ENCODE measurements at regions of chr5 and their contacts with region 1.

Region 1: DNA sequence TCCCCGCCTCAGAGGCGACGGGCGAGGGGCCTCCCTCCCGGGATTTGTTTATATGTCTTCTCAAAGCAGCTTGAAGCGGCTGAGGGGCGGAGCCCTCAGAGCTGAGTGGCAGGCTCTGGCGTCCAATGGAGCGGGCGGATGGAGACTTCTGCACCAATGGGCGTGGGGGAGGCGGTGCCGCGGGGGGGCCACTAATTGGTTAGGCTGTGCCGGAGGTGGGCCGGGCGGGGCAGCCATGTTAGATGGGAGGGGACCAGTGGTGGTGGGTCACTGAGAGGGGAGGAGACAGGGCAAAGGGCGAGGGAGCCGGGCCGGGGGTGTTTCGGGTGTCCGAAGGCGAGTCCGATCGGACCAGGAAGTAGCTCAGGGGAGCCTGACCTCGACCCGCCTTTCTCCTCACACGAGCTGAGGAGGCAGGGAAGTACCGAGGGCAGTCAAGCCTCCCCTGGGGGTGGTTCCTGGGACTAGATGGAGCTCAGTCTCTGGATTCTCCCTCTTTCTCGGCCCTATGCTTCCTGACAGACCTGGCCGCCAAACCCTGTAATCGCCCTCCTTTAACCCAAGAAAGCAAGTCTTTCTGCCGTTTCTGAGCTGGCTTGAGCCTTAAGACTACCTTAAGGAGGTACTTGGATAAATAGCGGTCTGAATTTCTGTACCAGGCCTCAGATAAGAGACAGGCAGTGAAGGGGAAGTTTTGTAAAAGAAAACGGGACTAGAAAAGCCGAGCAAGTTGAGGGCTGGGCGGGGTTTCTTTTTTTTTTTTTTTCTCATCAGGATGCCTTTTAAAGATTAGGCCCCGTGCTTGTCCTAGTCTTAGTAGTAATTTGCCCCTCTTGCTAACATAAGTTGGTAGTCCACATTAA is 1.1 kb downstream of the CREBRF start:
- DNase-seq: peak; percentile 100
- ATAC-seq: peak; percentile 90
- H3K4me3 Mint-ChIP-seq: peak overlapping the region; percentile 95
- H3K27ac Mint-ChIP-seq: peak overlapping the region; percentile 97
- H3K4me1 Mint-ChIP-seq: peaks cover 53% of the 10 kb centered on the region
- H3K27me3 Mint-ChIP-seq: no peaks in the 10 kb centered on the region

Region 2: GRCh38 chr5:171387345-171387969 is 1669.8 kb before region 1 on chr5 and contains the start of gene NPM1:
- CTCF ChIA-PET with region 1: no interaction called
- POLR2A ChIA-PET with region 1: no interaction called
- intact Hi-C with region 1: loop called in 1 of 2 experiments (anchors 2 kb)
- DNase-seq: peak; percentile 99
- ATAC-seq: peak; percentile 83
- H3K4me3 Mint-ChIP-seq: peak within 1 kb of the TSS; percentile 88
- H3K27ac Mint-ChIP-seq: peak within 1 kb of the TSS; percentile 99
- H3K4me1 Mint-ChIP-seq: peaks cover 37% of the 10 kb centered on the region
- H3K27me3 Mint-ChIP-seq: no peaks in the 10 kb centered on the region
- total RNA-seq, gene NPM1: 3,156 to 3,905 TPM

Region 3: GRCh38 chr5:172770675-172771438 is 286.4 kb before region 1 on chr5 and contains the start of gene DUSP1:
- CTCF ChIA-PET with region 1: no interaction called
- POLR2A ChIA-PET with region 1: no interaction called
- intact Hi-C with region 1: loop called in 1 of 2 experiments (anchors 2 kb)
- DNase-seq: peak; percentile 99
- ATAC-seq: peak; percentile 60
- H3K4me3 Mint-ChIP-seq: peak within 1 kb of the TSS; percentile 82
- H3K27ac Mint-ChIP-seq: peak within 1 kb of the TSS; percentile 97
- H3K4me1 Mint-ChIP-seq: peaks cover 67% of the 10 kb centered on the region
- H3K27me3 Mint-ChIP-seq: no peaks in the 10 kb centered on the region
- total RNA-seq, gene DUSP1: 6.7 to 7.4 TPM

Region 4: GRCh38 chr5:172951791-172952511 is 105.3 kb before region 1 on chr5:
- CTCF ChIA-PET with region 1: no interaction called
- POLR2A ChIA-PET with region 1: no interaction called
- intact Hi-C with region 1: no loop called
- DNase-seq: no peak
- ATAC-seq: no peak
- H3K4me3 Mint-ChIP-seq: no peak overlapping the region
- H3K27ac Mint-ChIP-seq: no peak overlapping the region
- H3K4me1 Mint-ChIP-seq: no peaks in the 10 kb centered on the region
- H3K27me3 Mint-ChIP-seq: no peaks in the 10 kb centered on the region

Region 5: DNA sequence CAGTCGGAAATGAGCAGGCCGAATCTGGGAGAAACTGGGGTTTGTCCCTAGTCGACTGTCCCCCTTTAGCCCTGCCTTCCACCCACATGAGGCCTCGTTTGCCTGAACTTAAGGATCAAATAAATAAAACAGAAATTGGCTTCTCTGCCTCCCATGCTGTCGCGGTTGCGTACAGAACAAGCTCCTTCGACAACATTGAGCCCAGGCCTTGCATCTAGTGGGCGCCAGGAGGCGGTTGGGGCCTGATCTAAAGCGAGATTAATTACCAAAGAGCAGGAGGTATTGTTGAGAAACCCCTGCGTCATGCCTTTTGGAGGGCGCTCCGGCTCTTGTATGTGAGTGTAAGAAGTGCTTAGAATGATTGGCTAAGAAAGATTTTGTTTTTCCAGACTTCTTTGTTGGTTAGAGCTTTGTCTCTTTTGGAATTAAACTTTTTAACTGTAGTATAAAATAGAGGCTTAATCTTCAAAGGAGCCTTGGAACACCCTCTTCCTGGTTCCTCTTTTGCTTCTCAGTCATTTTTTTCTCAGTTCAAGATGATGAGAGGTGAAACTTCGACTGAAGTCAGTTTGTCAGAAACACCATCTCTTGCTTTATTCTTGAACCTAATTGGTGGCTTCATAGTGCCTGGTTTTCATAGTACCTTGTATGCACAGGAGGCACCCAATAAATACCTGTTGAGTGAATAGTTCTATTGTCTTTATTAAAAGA is 72.9 kb before region 1 on chr5:
- CTCF ChIA-PET with region 1: interaction called, 16 read pairs
- POLR2A ChIA-PET with region 1: interaction called, 12 read pairs
- intact Hi-C with region 1: loop called (anchors 1 kb)
- DNase-seq: peak; percentile 90
- ATAC-seq: peak; percentile 79
- H3K4me3 Mint-ChIP-seq: peak overlapping the region; percentile 96
- H3K27ac Mint-ChIP-seq: peak overlapping the region; percentile 99
- H3K4me1 Mint-ChIP-seq: peaks cover 37% of the 10 kb centered on the region
- H3K27me3 Mint-ChIP-seq: no peaks in the 10 kb centered on the region

Region 6: DNA sequence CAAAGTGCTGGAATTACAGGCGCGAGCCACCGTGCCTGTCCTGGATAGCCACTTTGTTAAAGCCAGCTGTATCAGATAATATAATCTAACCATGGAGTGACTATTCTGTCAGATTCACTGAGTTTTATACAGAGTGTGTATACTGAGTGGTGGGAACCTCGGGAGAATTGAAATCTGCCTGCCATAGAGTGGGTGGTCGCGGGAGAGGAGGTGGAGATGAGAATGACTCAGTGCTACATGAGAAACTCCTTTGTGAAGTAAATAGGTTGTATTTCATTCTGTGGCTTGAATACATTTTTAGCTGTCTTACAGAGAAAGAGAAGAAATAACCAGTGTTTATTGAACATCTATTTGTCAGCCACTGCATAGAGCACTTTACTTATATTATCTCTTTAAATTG is 47.3 kb before region 1 on chr5:
- CTCF ChIA-PET with region 1: no interaction called
- POLR2A ChIA-PET with region 1: no interaction called
- intact Hi-C with region 1: no loop called
- DNase-seq: peak; percentile 56
- ATAC-seq: peak; percentile 78
- H3K4me3 Mint-ChIP-seq: no peak overlapping the region
- H3K27ac Mint-ChIP-seq: peak overlapping the region; percentile 47
- H3K4me1 Mint-ChIP-seq: peaks cover 44% of the 10 kb centered on the region
- H3K27me3 Mint-ChIP-seq: no peaks in the 10 kb centered on the region

Region 7: GRCh38 chr5:173144200-173145176 is 87.2 kb after region 1 on chr5 and contains the start of gene BNIP1:
- CTCF ChIA-PET with region 1: interaction called, 12 read pairs
- POLR2A ChIA-PET with region 1: interaction called, 5 read pairs
- intact Hi-C with region 1: loop called (anchors 1 kb)
- DNase-seq: peak; percentile 98
- ATAC-seq: peak; percentile 94
- H3K4me3 Mint-ChIP-seq: peak within 1 kb of the TSS; percentile 99
- H3K27ac Mint-ChIP-seq: peak within 1 kb of the TSS; percentile 99
- H3K4me1 Mint-ChIP-seq: peaks cover 10% of the 10 kb centered on the region
- H3K27me3 Mint-ChIP-seq: no peaks in the 10 kb centered on the region
- total RNA-seq, gene BNIP1: 24.2 to 26.8 TPM

Region 8: GRCh38 chr5:173917788-173918786 is 860.8 kb after region 1 on chr5:
- CTCF ChIA-PET with region 1: no interaction called
- POLR2A ChIA-PET with region 1: no interaction called
- intact Hi-C with region 1: loop called in 1 of 2 experiments (anchors 2 kb)
- DNase-seq: peak; percentile 73
- ATAC-seq: peak; percentile 96
- H3K4me3 Mint-ChIP-seq: no peak overlapping the region
- H3K27ac Mint-ChIP-seq: no peak overlapping the region
- H3K4me1 Mint-ChIP-seq: peaks cover 10% of the 10 kb centered on the region
- H3K27me3 Mint-ChIP-seq: no peaks in the 10 kb centered on the region

Measured in activated CD4-positive, alpha-beta T cell treated with anti-CD3 and anti-CD28 coated beads for 36 hours (primary cell).